Cardiac septum (tissue), 1 donor: ENCODE measurements at regions of chr1 and their contacts with region 1.

Region 1: DNA sequence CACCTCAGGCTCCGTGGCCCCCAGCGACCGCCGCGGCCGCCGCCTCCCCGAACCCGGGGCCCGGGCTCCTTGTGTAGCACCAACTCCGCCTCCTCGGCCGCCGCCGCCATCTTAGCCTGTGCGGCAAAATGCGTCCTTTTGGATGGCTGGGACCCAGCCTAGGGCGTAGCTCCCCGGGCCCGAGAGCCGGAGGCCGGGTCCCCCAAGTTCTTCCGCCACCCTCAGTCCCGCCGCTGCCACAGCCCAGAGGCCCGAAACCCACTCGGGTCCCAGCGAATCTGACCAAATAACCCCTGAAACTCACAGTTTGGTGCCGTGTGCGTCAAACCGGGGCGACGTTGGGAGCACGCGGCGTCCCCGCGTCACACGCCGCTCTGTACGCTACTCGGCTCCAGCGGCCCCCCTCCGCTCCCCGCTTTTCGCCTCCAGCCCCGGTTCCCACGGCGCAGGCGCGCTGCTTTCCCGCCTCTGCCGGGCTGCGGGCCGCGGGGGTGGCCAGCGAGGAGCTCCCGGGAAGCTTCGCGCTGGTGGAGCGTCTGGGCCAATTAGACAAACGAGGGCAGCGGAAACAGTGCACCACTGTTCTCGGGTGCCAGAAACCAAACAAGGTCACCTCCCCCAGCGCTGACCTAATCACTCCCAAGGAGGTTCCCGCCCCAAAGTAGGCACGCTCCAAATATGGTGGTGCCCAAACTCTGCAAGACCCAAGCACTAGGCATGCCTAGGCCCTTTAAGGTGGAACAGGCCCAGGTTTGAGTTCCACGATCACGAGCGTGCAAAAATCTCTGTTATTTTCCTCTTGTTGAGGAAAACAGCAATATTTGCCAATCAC is at the start of gene ZNF644:
- DNase-seq: peak; percentile 95
- total RNA-seq, gene ZNF644: 42.6 TPM

Region 2: GRCh38 chr1:90919900-90920299 is 102.0 kb before region 1 on chr1:
- intact Hi-C with region 1: loop called (anchors 5 kb)
- DNase-seq: no peak

Region 3: GRCh38 chr1:90964444-90965035 is 57.4 kb before region 1 on chr1:
- intact Hi-C with region 1: no loop called
- DNase-seq: no peak

Region 4: DNA sequence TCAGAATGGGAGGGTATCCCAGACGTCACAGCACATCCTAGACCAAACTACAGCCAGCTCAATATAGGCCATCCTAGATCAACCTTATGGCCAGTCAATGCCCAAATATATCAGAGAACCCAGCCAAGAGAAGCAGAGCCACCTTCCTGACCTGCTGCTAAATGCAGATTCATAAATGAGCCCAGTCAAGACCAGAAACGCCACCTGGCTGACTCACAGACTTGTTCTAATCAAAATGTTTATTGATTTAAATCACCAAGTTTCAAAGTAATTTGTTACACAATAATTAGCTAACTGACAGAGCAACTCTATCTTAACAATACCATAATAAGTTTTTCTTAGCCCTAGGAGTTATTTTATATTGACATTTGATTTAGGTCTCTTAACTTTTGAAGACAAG is 28.7 kb before region 1 on chr1:
- intact Hi-C with region 1: no loop called
- DNase-seq: no peak